CD8-positive, alpha-beta memory T cell (primary cell): ENCODE measurements at regions of chr11 and their contacts with region 1.

Region 1: GRCh38 chr11:1832211-1832919 is 2.4 kb upstream of the SYT8 start:
- DNase-seq: peak; percentile 57 to 73 (median 67)
- H3K4me3 ChIP-seq: no peak overlapping the region
- H3K4me3 Mint-ChIP-seq: no peak overlapping the region
- H3K27ac ChIP-seq: no peak overlapping the region
- H3K27ac Mint-ChIP-seq: peak overlapping the region in 1 of 8 donors; percentile 15
- H3K4me1 ChIP-seq: peaks cover 1% of the 10 kb centered on the region
- H3K4me1 Mint-ChIP-seq: peaks cover 0 to 2% (median 0%) of the 10 kb centered on the region in 3 donors
- H3K27me3 ChIP-seq: no peaks in the 10 kb centered on the region
- H3K27me3 Mint-ChIP-seq: peaks cover 15% of the 10 kb centered on the region in 2 donors

Region 2: DNA sequence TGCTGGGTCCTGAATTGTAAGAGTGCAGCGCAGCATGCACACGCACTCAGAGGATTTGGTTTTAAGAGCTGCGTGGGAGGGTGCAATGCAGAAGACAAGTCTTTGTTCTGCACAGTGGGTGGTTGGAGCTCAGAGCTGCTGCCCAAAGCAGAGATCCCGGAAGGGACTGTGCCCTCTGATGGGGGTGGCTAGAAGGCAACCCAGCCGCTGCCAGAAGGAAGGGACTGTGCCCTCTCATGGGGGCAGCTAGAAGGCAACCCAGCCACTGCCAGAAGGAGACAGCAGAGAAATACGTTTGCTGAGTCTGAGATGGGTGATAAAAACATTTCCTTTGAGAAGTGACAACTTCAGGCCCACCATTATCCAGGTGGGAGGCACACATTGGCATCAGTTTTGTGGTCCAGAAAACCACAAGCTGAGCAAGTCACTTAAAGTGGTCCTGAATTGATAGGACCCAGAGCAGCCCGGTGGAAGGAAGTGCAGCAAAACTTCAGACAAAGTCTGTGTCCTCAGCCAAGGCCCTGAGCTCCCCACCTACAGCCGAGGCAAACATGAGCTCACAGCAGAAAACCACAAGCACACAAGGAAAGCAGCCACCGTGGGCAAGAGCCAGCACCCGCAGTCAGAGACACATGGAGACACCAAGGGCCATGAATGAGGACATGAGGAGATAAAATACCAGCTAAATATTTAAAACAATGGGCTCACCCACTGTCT is 131.1 kb before region 1 on chr11:
- CTCF ChIA-PET with region 1: interaction called, 29 read pairs
- POLR2A ChIA-PET with region 1: no interaction called
- DNase-seq: peak in 1 of 5 donors; percentile 25
- H3K4me3 ChIP-seq: peak overlapping the region; percentile 7
- H3K4me3 Mint-ChIP-seq: peak overlapping the region in 4 of 7 donors; percentile 32 to 52 (median 42)
- H3K27ac ChIP-seq: no peak overlapping the region
- H3K27ac Mint-ChIP-seq: peak overlapping the region in 5 of 8 donors; percentile 13 to 88 (median 45)
- H3K4me1 ChIP-seq: peaks cover 10% of the 10 kb centered on the region
- H3K4me1 Mint-ChIP-seq: peaks cover 18 to 35% (median 28%) of the 10 kb centered on the region in 3 donors
- H3K27me3 ChIP-seq: no peaks in the 10 kb centered on the region
- H3K27me3 Mint-ChIP-seq: peaks cover 5 to 13% of the 10 kb centered on the region in 2 donors

Region 3: GRCh38 chr11:1852877-1853276 is 20.5 kb after region 1 on chr11 and contains the start of gene LSP1:
- CTCF ChIA-PET with region 1: interaction called, 17 read pairs
- POLR2A ChIA-PET with region 1: no interaction called
- DNase-seq: peak; percentile 69 to 93 (median 87)
- H3K4me3 ChIP-seq: peak within 1 kb of the TSS; percentile 63
- H3K4me3 Mint-ChIP-seq: peak within 1 kb of the TSS; percentile 92 to 99 (median 99)
- H3K27ac ChIP-seq: peak within 1 kb of the TSS; percentile 74
- H3K27ac Mint-ChIP-seq: peak within 1 kb of the TSS; percentile 90 to 100 (median 98)
- H3K4me1 ChIP-seq: peaks cover 81% of the 10 kb centered on the region
- H3K4me1 Mint-ChIP-seq: peaks cover 50 to 73% (median 55%) of the 10 kb centered on the region in 3 donors
- H3K27me3 ChIP-seq: no peaks in the 10 kb centered on the region
- H3K27me3 Mint-ChIP-seq: no peaks in the 10 kb centered on the region
- total RNA-seq, gene LSP1: 226 to 230 TPM

Region 4: GRCh38 chr11:1863352-1864216 is 31.2 kb after region 1 on chr11:
- CTCF ChIA-PET with region 1: no interaction called
- POLR2A ChIA-PET with region 1: no interaction called
- DNase-seq: no peak
- H3K4me3 ChIP-seq: no peak overlapping the region
- H3K4me3 Mint-ChIP-seq: peak overlapping the region in 3 of 7 donors; percentile 34 to 76 (median 63)
- H3K27ac ChIP-seq: no peak overlapping the region
- H3K27ac Mint-ChIP-seq: peak overlapping the region in 4 of 8 donors; percentile 23 to 71 (median 46)
- H3K4me1 ChIP-seq: peaks cover 55% of the 10 kb centered on the region
- H3K4me1 Mint-ChIP-seq: peaks cover 14 to 32% (median 32%) of the 10 kb centered on the region in 3 donors
- H3K27me3 ChIP-seq: no peaks in the 10 kb centered on the region
- H3K27me3 Mint-ChIP-seq: no peaks in the 10 kb centered on the region

Region 5: DNA sequence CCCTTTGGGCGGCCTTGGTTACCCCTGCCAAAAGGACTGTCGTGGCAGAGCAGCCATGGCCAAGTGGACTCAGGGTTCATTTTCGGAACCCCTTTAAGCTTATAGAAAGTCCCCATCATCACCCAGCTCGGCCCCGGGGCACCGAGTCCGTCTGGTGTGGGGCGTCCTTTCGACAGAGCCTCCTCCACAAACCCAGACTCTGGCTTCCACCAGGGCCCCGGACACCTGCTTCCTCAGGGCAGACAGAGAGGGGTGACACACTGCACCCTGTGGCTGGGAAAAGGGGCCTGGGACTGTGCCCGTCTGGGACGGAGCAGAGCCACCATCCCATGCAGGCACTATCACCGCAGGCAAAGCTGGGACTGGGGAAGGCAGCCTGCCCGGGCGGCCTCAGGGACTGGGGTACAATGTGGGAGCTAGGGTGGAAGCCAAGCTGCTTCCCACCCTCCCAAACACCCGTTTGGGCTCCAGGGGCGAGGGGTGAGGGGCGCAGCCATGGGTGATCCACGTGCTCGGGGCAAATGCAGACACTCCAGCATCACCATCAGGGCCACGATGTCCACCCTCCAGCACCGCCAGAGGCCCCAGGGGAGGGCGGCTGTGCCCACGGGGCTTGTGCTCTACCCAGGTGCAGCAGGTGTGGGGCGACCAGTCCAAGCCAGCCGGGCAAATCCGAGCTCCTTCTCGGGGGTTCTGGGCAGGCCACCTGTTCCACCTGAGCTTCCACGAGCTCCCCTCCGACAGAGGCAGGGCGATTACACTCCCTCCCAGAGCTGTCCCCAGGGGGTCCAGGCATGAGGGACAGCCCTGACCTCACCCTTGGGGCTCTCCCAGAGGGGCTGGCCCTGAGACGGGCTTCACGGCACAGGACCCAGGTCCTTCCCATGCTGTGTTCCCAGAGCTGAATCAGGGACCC is 103.0 kb after region 1 on chr11:
- CTCF ChIA-PET with region 1: interaction called, 10 read pairs
- POLR2A ChIA-PET with region 1: no interaction called
- DNase-seq: peak in 1 of 5 donors; percentile 41
- H3K4me3 ChIP-seq: no peak overlapping the region
- H3K4me3 Mint-ChIP-seq: no peak overlapping the region
- H3K27ac ChIP-seq: no peak overlapping the region
- H3K27ac Mint-ChIP-seq: no peak overlapping the region
- H3K4me1 ChIP-seq: no peaks in the 10 kb centered on the region
- H3K4me1 Mint-ChIP-seq: peaks cover 7 to 13% (median 8%) of the 10 kb centered on the region in 3 donors
- H3K27me3 ChIP-seq: no peaks in the 10 kb centered on the region
- H3K27me3 Mint-ChIP-seq: peaks cover 3 to 9% of the 10 kb centered on the region in 2 donors

Region 6: GRCh38 chr11:2151500-2152257 is 319.3 kb after region 1 on chr11:
- CTCF ChIA-PET with region 1: interaction called, 65 read pairs
- POLR2A ChIA-PET with region 1: no interaction called
- DNase-seq: peak; percentile 67 to 86 (median 71)
- H3K4me3 ChIP-seq: peak overlapping the region; percentile 23
- H3K4me3 Mint-ChIP-seq: peak overlapping the region in 6 of 7 donors; percentile 30 to 81 (median 58)
- H3K27ac ChIP-seq: no peak overlapping the region
- H3K27ac Mint-ChIP-seq: peak overlapping the region in 3 of 8 donors; percentile 51 to 79 (median 61)
- H3K4me1 ChIP-seq: peaks cover 6% of the 10 kb centered on the region
- H3K4me1 Mint-ChIP-seq: peaks cover 7 to 8% (median 7%) of the 10 kb centered on the region in 3 donors
- H3K27me3 ChIP-seq: peaks cover 13% of the 10 kb centered on the region
- H3K27me3 Mint-ChIP-seq: peaks cover 24 to 32% of the 10 kb centered on the region in 2 donors